Gastrocnemius medialis (tissue), 4 donors: ENCODE measurements at regions of chr1 and their contacts with region 1.

Region 1: GRCh38 chr1:45490626-45491486 is at the start of gene TESK2:
- DNase-seq: peak; percentile 98 to 99
- ATAC-seq: peak; percentile 95 to 98
- H3K4me3 ChIP-seq: peak within 1 kb of the TSS; percentile 68 to 99 (median 90)
- H3K27ac ChIP-seq: peak within 1 kb of the TSS; percentile 87 to 96 (median 92)
- H3K4me1 ChIP-seq: peaks cover 14 to 19% of the 10 kb centered on the region in 2 donors
- H3K27me3 ChIP-seq: no peaks in the 10 kb centered on the region
- CTCF ChIP-seq: peak in 4 of 5 experiments; percentile 27 to 56 (median 30)
- POLR2A ChIP-seq: peak; percentile 89 to 92
- total RNA-seq, gene TESK2: 3.4 to 5.8 (median 4.5) TPM

Region 2: GRCh38 chr1:45018599-45019230 is 472.1 kb before region 1 on chr1:
- in situ Hi-C with region 1: loop called (anchors 5 to 25 kb)
- intact Hi-C with region 1: loop called (anchors 2 kb)
- DNase-seq: no peak
- ATAC-seq: peak in 1 of 2 donors; percentile 46
- H3K4me3 ChIP-seq: no peak overlapping the region
- H3K27ac ChIP-seq: no peak overlapping the region
- H3K4me1 ChIP-seq: peaks cover 6 to 15% of the 10 kb centered on the region in 2 donors
- H3K27me3 ChIP-seq: no peaks in the 10 kb centered on the region
- CTCF ChIP-seq: peak in 4 of 5 experiments; percentile 35 to 52 (median 43)
- POLR2A ChIP-seq: no peak